ENCODE measurements at regions of chr13 and their contacts with region 1.

Region 1: DNA sequence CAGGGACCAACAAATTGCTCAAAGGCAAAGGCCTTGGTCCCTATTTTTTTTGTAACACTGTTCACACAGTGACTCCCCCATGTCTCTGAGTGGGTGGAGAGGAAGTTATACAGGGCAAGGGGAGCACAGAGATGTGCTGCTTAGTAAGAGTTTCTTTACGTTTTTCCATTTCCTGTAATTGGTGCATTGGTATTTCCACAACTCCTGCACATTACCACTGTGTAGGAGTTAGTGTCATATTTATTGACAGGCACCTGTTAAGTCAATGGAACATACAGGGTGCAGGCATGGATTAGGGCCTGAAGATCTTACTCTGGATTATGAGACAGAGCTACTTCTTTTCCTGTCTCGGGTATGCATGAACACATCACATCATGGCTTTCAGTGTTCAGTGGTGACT is 45.2 kb downstream of the SOX21 start:
- DNase-seq: peak; percentile 23
- H3K4me3 Mint-ChIP-seq: no peak overlapping the region
- H3K27ac Mint-ChIP-seq: peak overlapping the region; percentile 64
- H3K4me1 Mint-ChIP-seq: peaks cover 25% of the 10 kb centered on the region
- H3K27me3 Mint-ChIP-seq: peaks cover 17% of the 10 kb centered on the region

Region 2: GRCh38 chr13:94811753-94812152 is 144.6 kb after region 1 on chr13:
- CTCF ChIA-PET with region 1: no interaction called
- POLR2A ChIA-PET with region 1: no interaction called
- intact Hi-C with region 1: no loop called
- DNase-seq: no peak
- H3K4me3 Mint-ChIP-seq: no peak overlapping the region
- H3K27ac Mint-ChIP-seq: no peak overlapping the region
- H3K4me1 Mint-ChIP-seq: no peaks in the 10 kb centered on the region
- H3K27me3 Mint-ChIP-seq: peaks cover 3% of the 10 kb centered on the region

Region 3: DNA sequence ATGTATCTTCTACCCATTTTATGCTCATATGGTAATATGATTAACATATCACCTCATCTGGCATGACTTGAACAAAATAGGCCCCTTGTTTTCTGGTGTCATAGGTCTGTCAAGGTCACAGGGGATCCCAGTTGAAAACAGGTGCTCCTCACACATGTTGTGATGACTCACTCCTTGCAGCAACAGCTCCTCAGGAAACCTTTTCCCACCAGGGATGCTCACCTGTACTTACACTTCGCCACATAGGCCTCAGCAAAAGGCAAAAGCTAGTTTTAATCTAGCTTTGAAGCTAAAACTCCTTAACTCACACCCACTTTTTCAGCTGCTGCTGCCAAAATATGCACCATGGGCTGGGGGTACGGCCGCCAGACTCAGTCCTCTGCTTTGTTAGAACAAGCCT is 155.2 kb after region 1 on chr13:
- CTCF ChIA-PET with region 1: no interaction called
- POLR2A ChIA-PET with region 1: no interaction called
- intact Hi-C with region 1: no loop called
- DNase-seq: no peak
- H3K4me3 Mint-ChIP-seq: no peak overlapping the region
- H3K27ac Mint-ChIP-seq: no peak overlapping the region
- H3K4me1 Mint-ChIP-seq: no peaks in the 10 kb centered on the region
- H3K27me3 Mint-ChIP-seq: peaks cover 7% of the 10 kb centered on the region

Region 4: DNA sequence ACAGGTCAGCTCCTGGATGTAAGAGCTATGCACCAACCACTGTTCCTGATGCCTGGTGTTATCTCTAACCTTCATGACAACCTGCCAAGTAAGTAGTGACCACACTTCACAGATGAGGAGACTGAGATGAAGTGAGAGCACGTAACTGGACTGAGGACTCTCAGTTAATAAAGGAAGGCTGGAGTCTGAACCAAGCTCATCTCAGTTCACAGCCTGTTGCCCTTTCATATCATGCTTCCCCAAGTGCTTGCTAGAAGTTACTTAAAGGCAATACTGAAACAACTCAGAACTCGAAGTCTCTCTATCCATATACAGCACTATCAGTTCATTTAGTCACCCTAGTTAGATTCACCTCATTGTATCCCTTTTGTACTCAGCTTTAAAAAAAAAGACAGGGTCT is 514.4 kb after region 1 on chr13:
- CTCF ChIA-PET with region 1: no interaction called
- POLR2A ChIA-PET with region 1: no interaction called
- intact Hi-C with region 1: loop called (anchors 5 kb)
- DNase-seq: no peak
- H3K4me3 Mint-ChIP-seq: no peak overlapping the region
- H3K27ac Mint-ChIP-seq: peak overlapping the region; percentile 57
- H3K4me1 Mint-ChIP-seq: peaks cover 64% of the 10 kb centered on the region
- H3K27me3 Mint-ChIP-seq: no peaks in the 10 kb centered on the region